ENCODE measurements at regions of chr2 and their contacts with region 1.

Region 1: GRCh38 chr2:175203621-175204496 is 22.3 kb upstream of the ATP5MC3 start:
- DNase-seq: peak; percentile 64
- ATAC-seq: peak; percentile 84
- H3K4me3 Mint-ChIP-seq: no peak overlapping the region
- H3K27ac Mint-ChIP-seq: no peak overlapping the region
- H3K4me1 Mint-ChIP-seq: no peaks in the 10 kb centered on the region
- H3K27me3 Mint-ChIP-seq: peaks cover 15% of the 10 kb centered on the region

Region 2: DNA sequence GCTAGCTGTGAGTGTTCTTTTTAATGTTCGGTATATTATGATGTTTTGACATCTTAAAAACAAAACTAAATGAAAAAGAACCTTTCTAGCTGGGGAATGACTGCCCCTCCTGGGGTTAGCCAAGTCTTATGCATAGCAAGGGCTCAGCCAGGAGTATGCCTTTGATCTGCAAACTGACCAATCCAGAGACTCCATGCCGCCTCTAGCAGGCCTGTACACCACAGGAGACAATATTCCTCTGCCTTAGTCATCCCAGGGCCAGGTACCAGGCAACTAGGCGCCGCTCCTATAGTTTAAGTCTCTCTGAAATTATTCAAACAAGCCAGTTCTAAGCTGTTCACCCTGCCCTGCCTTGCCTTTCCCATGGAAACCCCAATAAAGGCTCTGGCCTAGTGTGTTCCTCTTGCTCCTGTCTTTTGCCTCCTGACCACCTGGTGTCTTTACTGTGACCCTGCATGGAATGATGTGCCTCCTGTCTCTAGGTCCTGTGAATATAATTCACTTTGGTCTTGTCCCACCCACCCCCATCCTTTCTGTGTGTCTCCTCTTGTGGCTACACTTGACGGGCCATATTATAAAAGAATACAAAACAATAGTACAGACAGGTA is 146.7 kb before region 1 on chr2:
- CTCF ChIA-PET with region 1: no interaction called
- POLR2A ChIA-PET with region 1: no interaction called
- DNase-seq: no peak
- ATAC-seq: no peak
- H3K4me3 Mint-ChIP-seq: no peak overlapping the region
- H3K27ac Mint-ChIP-seq: no peak overlapping the region
- H3K4me1 Mint-ChIP-seq: peaks cover 8% of the 10 kb centered on the region
- H3K27me3 Mint-ChIP-seq: no peaks in the 10 kb centered on the region

Region 3: DNA sequence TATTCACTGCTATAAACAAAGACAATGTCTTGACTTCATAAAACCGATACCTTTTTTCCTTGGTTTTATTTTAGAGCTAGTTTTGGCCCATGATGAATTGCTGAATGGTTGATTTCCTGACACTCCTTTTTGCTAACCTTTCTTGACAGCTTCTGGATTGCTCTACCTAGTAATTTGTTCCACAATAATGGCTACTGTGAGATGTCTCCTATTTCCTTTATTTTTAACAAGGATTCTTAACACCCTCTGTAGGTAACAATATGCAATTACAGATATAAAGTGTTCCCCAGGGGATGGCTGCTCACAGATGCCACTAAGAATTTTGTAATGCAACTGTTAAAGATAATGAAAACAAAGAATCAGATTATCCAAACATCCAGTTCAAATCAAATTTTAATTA is 78.4 kb after region 1 on chr2:
- CTCF ChIA-PET with region 1: interaction called, 56 read pairs
- POLR2A ChIA-PET with region 1: no interaction called
- DNase-seq: no peak
- ATAC-seq: peak; percentile 44
- H3K4me3 Mint-ChIP-seq: no peak overlapping the region
- H3K27ac Mint-ChIP-seq: no peak overlapping the region
- H3K4me1 Mint-ChIP-seq: no peaks in the 10 kb centered on the region
- H3K27me3 Mint-ChIP-seq: peaks cover 14% of the 10 kb centered on the region

Region 4: DNA sequence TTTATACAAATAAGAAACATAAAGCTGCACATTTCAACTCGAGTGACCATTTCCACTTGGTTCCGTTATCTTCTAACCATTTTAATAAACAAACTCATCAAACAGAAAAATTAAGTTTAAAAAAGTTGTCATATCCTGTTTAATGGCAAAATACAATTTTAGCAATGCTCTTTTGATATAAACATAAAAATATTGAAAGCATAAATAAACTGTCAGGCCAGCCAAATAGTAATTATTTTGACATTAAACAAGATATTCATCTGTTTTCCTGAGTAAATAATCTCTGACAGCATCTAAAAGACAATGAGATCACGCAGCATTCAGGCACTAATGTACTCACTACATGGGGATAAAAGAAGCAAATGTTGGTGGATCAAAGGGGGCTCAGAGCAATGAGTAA is 122.9 kb after region 1 on chr2:
- CTCF ChIA-PET with region 1: interaction called, 14 read pairs
- POLR2A ChIA-PET with region 1: no interaction called
- DNase-seq: no peak
- ATAC-seq: no peak
- H3K4me3 Mint-ChIP-seq: no peak overlapping the region
- H3K27ac Mint-ChIP-seq: no peak overlapping the region
- H3K4me1 Mint-ChIP-seq: peaks cover 9% of the 10 kb centered on the region
- H3K27me3 Mint-ChIP-seq: peaks cover 2% of the 10 kb centered on the region

Measured in activated CD8-positive, alpha-beta T cell treated with anti-CD3 and anti-CD28 coated beads, Interleukin-2, amount 10 ng/mL, durations not matched to agents 7 days and 5 days (primary cell).